Activated CD8-positive, alpha-beta memory T cell treated with anti-CD3 and anti-CD28 coated beads, Interleukin-2, amount 10 ng/mL, durations not matched to agents 7 days and 5 days (primary cell): ENCODE measurements at regions of chr14 and their contacts with region 1.

Region 1: GRCh38 chr14:65412032-65412846 is at the start of gene FUT8:
- DNase-seq: peak; percentile 95
- ATAC-seq: peak; percentile 87
- H3K4me3 Mint-ChIP-seq: peak within 1 kb of the TSS; percentile 89
- H3K27ac Mint-ChIP-seq: peak within 1 kb of the TSS; percentile 98
- H3K4me1 Mint-ChIP-seq: peaks cover 49% of the 10 kb centered on the region
- H3K27me3 Mint-ChIP-seq: no peaks in the 10 kb centered on the region
- total RNA-seq, gene FUT8: 114 to 161 TPM

Region 2: DNA sequence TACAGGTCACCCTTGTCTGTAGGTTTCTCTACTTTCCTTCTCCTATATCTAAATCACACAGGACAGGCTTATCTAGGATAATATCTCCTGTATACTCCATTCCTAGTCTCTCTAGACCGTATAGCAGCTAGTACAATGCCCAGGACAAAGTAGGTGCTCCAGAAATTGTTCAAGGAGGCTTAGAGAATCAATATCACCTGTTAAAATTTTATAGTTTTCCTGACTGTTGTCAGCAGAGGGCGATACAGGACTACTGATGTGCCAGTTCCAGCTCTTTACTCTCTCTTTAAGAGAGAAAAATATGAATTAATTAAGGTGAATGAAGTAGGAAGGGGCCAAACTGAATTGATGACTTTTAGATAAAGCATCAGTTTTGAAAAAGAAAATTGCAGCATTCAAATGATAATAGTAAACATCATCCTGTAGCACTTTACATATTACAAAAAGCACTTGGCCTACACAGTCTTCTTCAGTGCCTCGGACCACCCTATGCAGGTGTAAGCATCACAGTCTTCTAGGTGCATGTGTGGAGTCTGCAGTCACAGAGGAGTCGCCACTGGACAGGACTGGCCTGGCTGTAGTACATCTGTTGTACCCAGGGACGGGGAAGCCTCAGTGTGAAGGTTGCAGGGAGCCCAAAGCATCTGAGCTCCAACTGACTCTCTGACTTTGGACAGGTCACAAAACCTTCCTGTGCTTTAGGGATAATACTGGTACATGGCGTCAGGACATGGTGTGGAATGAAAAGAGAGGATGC is 248.0 kb before region 1 on chr14:
- CTCF ChIA-PET with region 1: interaction called, 33 read pairs
- DNase-seq: peak; percentile 48
- ATAC-seq: peak; percentile 68
- H3K4me3 Mint-ChIP-seq: no peak overlapping the region
- H3K27ac Mint-ChIP-seq: no peak overlapping the region
- H3K4me1 Mint-ChIP-seq: peaks cover 19% of the 10 kb centered on the region
- H3K27me3 Mint-ChIP-seq: no peaks in the 10 kb centered on the region

Region 3: GRCh38 chr14:65170768-65171507 is 241.3 kb before region 1 on chr14:
- CTCF ChIA-PET with region 1: interaction called, 12 read pairs
- DNase-seq: peak; percentile 68
- ATAC-seq: peak; percentile 73
- H3K4me3 Mint-ChIP-seq: peak overlapping the region; percentile 61
- H3K27ac Mint-ChIP-seq: peak overlapping the region; percentile 5
- H3K4me1 Mint-ChIP-seq: peaks cover 29% of the 10 kb centered on the region
- H3K27me3 Mint-ChIP-seq: peaks cover 12% of the 10 kb centered on the region

Region 4: DNA sequence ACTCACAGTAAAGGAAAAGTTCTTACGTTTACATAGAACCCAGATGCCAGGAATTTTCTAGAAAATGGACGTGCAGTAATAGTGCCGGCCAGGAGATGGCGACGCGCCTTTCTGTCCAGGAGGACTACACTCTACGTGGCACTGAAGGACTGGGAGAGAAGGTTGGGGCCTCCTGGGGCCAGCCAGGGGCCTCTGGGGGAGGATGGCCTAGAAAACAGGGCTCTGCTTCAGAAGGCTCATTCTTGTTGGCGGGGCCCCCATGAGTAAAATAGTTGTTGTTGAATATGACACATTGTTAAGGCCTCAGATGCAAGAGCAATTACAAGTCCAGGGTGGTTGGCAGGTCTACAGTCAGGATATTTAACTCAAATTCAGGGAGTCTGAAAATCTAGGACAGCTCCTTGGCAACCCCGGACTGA is 189.8 kb before region 1 on chr14:
- CTCF ChIA-PET with region 1: interaction called, 12 read pairs
- DNase-seq: peak; percentile 71
- ATAC-seq: peak; percentile 85
- H3K4me3 Mint-ChIP-seq: no peak overlapping the region
- H3K27ac Mint-ChIP-seq: peak overlapping the region; percentile 37
- H3K4me1 Mint-ChIP-seq: peaks cover 42% of the 10 kb centered on the region
- H3K27me3 Mint-ChIP-seq: no peaks in the 10 kb centered on the region

Region 5: DNA sequence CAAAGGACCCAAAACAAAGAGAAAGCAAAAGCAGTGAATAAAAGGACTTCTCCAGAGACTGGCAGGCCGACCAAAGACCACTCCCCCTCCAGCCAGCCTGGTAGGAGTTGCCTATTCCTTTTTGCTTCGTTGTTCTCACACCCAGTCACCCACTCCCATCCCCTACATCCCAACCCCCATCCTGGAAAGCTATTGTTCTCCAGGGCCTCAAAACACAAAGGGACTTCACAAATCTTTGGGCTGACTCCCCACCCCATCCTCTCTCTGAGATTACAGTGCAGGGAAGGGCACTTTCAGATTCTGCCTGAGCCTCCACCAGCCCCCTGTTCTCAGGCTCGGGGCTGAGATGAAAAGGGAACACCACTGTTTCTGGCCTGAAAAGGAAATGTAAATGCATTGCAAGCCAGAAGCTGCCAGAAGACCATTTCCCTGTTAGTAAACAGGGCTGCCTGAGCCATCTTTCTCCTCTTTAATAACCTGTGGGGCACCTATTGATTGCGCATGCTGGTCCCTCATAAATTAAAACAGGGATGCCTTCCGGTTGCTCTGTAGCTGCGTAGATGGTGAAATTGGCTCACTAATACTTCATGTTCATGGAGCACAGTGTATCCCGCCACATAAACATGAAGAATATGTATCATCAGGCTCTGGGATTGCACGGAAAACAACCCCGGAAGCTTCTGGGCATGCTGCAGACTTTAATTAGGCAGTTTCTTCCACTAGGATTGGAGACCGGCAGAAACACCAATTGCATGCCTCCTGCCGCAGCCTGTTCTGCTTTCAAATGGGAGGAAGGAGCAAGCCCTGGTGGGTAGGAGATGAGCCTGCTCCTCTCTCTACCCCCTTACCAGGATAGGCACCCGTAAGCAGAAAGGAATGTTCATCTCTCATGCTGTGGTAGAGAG is 130.0 kb before region 1 on chr14:
- CTCF ChIA-PET with region 1: interaction called, 79 read pairs
- DNase-seq: peak; percentile 63
- ATAC-seq: peak; percentile 65
- H3K4me3 Mint-ChIP-seq: peak overlapping the region; percentile 74
- H3K27ac Mint-ChIP-seq: peak overlapping the region; percentile 96
- H3K4me1 Mint-ChIP-seq: peaks cover 34% of the 10 kb centered on the region
- H3K27me3 Mint-ChIP-seq: no peaks in the 10 kb centered on the region

Region 6: GRCh38 chr14:65824285-65824977 is 412.2 kb after region 1 on chr14:
- CTCF ChIA-PET with region 1: interaction called, 49 read pairs
- DNase-seq: peak; percentile 82
- ATAC-seq: peak; percentile 90
- H3K4me3 Mint-ChIP-seq: no peak overlapping the region
- H3K27ac Mint-ChIP-seq: peak overlapping the region; percentile 62
- H3K4me1 Mint-ChIP-seq: peaks cover 7% of the 10 kb centered on the region
- H3K27me3 Mint-ChIP-seq: no peaks in the 10 kb centered on the region

Region 7: DNA sequence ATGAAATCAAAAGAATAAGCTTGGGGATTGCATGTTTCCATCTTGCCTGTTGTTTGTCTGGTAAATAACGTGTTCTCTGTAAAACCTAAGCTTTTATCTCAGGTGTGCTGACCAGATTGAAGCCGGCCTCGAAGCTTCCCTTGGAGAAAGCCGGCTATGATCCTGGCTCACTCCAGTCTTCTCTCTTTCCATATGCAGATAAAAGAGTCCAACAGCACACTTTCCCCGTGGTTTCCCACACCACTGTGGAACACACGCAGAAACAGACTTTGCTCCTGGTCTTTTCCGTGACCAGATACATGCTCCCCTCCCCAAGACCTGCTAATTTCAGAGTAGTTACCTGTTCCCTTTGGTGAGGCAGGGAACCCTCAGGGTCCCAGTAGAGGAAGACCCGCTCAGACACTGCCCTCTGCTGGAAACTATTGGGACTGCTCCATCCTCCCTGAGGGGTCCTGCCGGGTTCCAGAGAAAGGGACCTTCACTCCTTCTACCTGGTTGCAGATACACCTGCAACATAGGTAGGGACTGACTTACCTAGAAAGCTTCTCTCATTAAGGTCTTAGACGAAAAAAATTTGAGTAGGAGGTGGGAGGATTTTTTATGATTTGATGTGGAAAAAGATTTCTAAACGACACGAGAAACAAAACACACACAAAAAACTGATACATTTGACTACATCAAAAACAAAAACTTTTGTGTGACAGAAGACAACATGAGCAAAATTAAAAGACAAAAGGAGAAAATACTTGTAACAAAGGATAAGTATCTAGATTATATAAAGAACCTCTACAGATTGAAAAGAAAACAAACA is 658.5 kb after region 1 on chr14:
- CTCF ChIA-PET with region 1: interaction called, 17 read pairs
- DNase-seq: peak; percentile 73
- ATAC-seq: peak; percentile 73
- H3K4me3 Mint-ChIP-seq: no peak overlapping the region
- H3K27ac Mint-ChIP-seq: no peak overlapping the region
- H3K4me1 Mint-ChIP-seq: peaks cover 1% of the 10 kb centered on the region
- H3K27me3 Mint-ChIP-seq: peaks cover 13% of the 10 kb centered on the region